Aorta (tissue), 5 donors: ENCODE measurements at regions of chr1 and their contacts with region 1.

Region 1: GRCh38 chr1:244451951-244452795 is 464 bp upstream of the ADSS2 start:
- DNase-seq: peak; percentile 100
- ATAC-seq: peak; percentile 100
- H3K4me3 ChIP-seq: peak overlapping the region in 1 of 2 donors; percentile 40
- H3K27ac ChIP-seq: no peak overlapping the region
- H3K4me1 ChIP-seq: peaks cover 5% of the 10 kb centered on the region in 2 donors
- H3K27me3 ChIP-seq: no peaks in the 10 kb centered on the region

Region 2: DNA sequence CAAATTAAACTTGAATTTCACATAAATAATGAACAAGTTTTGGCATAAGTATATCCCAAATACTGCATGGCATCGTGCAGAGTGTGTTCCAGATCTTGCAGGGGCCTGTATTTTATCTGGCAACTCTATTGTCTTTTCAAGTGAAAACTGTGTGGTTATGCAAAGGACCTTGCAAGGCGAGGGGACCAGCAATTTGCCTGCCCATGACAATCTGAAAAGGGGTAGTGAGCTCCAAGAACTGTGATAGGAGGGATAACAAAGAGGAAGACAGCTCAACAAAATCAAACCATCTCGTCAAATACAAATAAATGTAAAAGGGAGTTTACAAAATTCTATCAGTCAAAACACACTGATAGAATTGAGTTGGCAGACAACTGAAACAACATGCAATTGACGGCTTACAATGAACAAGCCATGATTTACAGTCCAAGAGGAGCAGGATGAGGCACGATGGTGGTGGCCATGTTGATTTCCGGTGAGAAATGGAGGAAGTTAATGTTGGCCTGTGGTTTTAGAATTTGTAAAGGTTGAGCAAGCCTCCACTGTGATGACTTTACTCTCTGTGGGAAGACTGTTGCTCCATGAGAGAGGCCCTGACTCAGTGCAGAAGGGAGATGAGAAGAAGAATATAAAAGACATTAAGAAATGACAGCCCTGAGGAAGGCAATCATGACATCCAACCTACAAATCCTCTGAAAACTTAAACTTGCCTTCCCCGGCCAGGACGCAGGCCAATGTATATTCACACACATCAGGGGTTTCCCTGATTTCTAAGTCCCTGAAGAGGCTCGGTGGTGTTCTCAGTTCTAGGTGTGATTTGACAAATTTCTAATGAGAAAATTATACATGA is 132.7 kb before region 1 on chr1:
- intact Hi-C with region 1: loop called in 1 of 2 experiments (anchors 5 kb)
- DNase-seq: no peak
- ATAC-seq: no peak
- H3K4me3 ChIP-seq: no peak overlapping the region
- H3K27ac ChIP-seq: no peak overlapping the region
- H3K4me1 ChIP-seq: peaks cover 0 to 1% of the 10 kb centered on the region in 2 donors
- H3K27me3 ChIP-seq: no peaks in the 10 kb centered on the region

Region 3: DNA sequence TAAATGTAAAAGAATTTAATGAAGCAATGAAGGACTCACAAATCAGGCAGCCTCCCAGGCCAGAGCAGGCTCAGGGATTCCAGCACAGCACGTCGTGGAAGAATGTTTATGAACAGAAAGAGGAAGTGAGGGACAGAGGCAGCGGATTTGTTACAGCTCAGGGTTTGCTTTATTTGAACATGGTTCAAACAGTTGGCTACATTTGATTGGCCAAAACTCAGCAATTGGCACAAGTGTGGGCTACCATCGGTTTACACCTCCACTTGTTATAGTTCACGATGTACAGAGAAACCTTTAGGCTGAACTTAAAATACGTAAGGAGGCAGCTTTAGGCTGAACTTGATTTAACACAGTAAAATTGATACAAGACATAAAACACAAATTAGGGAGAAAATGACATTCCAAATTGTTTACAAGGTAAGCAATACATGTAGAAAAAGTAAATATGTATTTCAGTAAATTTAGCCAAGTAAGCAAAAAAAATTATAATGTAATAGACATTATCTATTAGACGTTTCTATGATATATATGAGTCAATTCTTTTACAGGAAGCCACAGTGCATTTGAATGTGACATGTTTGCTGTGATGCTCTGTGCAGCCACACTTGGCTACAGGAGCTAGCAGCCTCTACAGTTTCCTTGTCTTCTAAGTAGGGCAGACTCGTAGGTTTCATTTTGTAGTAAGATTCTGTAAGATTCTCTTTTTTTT is 127.0 kb before region 1 on chr1:
- intact Hi-C with region 1: loop called (anchors 5 kb)
- DNase-seq: peak in 1 of 2 donors; percentile 69
- ATAC-seq: no peak
- H3K4me3 ChIP-seq: no peak overlapping the region
- H3K27ac ChIP-seq: no peak overlapping the region
- H3K4me1 ChIP-seq: peaks cover 0 to 3% of the 10 kb centered on the region in 2 donors
- H3K27me3 ChIP-seq: no peaks in the 10 kb centered on the region